ENCODE measurements at regions of chr2 and their contacts with region 1.

Region 1: GRCh38 chr2:143162123-143162837 is 33.1 kb downstream of the ARHGAP15 start:
- DNase-seq: peak; percentile 77
- H3K4me3 Mint-ChIP-seq: peak overlapping the region; percentile 2
- H3K27ac Mint-ChIP-seq: peak overlapping the region; percentile 53
- H3K4me1 Mint-ChIP-seq: peaks cover 82% of the 10 kb centered on the region
- H3K27me3 Mint-ChIP-seq: no peaks in the 10 kb centered on the region

Region 2: DNA sequence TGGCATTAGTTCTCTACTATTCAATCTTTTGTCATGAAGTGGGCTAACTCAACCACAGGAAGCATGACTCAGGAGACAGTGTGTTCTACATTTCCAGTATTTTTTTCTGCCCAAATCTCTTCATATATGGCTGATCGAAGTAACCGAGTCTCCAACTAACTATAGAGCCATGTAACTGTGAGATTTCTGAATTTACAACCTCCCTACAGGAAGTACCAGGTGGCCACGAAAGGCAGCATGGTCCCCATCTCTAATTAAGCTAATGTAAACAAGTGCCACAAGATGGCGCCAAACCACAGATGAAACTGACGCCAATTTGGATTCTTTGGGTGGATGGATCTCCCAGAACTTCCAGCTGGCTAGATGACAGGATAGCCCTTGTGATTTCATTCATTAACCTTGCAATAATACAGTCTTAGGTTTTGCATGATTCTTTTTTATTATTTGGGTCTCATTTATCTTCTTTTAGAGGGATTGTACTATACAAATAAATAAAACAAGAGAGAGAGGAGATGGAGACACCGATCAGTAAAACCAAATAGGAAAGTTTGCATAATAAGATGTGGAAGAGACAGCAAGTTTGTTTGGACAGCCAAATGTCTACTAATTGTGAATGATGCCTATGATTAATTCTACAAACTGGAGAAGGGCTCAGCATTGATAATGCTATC is 51.4 kb before region 1 on chr2:
- CTCF ChIA-PET with region 1: interaction called, 60 read pairs
- intact Hi-C with region 1: loop called (anchors 1 kb)
- DNase-seq: peak; percentile 82
- H3K4me3 Mint-ChIP-seq: peak overlapping the region; percentile 59
- H3K27ac Mint-ChIP-seq: peak overlapping the region; percentile 90
- H3K4me1 Mint-ChIP-seq: peaks cover 46% of the 10 kb centered on the region
- H3K27me3 Mint-ChIP-seq: no peaks in the 10 kb centered on the region

Region 3: GRCh38 chr2:143150287-143150686 is 12.0 kb before region 1 on chr2:
- CTCF ChIA-PET with region 1: interaction called, 11 read pairs
- intact Hi-C with region 1: loop called (anchors 1 kb)
- DNase-seq: peak; percentile 33
- H3K4me3 Mint-ChIP-seq: peak overlapping the region; percentile 52
- H3K27ac Mint-ChIP-seq: peak overlapping the region; percentile 91
- H3K4me1 Mint-ChIP-seq: peaks cover 80% of the 10 kb centered on the region
- H3K27me3 Mint-ChIP-seq: no peaks in the 10 kb centered on the region

Region 4: GRCh38 chr2:143217512-143218115 is 55.3 kb after region 1 on chr2:
- CTCF ChIA-PET with region 1: interaction called, 57 read pairs
- intact Hi-C with region 1: loop called (anchors 1 kb)
- DNase-seq: no peak
- H3K4me3 Mint-ChIP-seq: no peak overlapping the region
- H3K27ac Mint-ChIP-seq: peak overlapping the region; percentile 48
- H3K4me1 Mint-ChIP-seq: peaks cover 32% of the 10 kb centered on the region
- H3K27me3 Mint-ChIP-seq: no peaks in the 10 kb centered on the region

Region 5: DNA sequence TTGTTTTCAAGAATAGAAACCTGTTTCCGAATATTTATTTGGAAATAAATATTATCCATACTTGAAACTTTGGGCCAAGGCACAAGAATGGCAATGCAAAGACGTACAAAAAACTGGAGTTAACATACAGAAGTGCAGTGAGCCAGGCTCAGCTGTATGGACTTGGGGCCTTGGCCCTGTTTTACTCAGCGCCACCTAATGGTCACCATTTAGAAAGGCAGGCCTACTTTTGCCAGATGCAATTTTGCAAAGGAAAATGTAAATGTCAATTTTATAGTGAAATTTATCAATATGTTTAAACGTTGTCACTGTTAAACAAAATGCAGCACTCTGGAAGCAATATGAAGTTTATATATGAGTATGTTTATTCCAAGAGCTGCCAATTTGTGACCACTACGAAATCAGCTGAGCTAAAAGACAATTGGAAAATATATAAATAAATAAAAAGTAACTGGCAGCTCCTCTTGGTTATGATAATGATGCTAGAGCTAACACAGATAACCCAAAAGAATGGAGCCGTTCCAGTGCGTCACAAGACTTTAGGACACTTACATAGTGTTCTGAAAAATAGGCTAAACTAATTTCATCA is 121.9 kb after region 1 on chr2:
- CTCF ChIA-PET with region 1: interaction called, 9 read pairs
- intact Hi-C with region 1: loop called (anchors 1 kb)
- DNase-seq: peak; percentile 38
- H3K4me3 Mint-ChIP-seq: no peak overlapping the region
- H3K27ac Mint-ChIP-seq: no peak overlapping the region
- H3K4me1 Mint-ChIP-seq: peaks cover 48% of the 10 kb centered on the region
- H3K27me3 Mint-ChIP-seq: no peaks in the 10 kb centered on the region

Region 6: GRCh38 chr2:143468341-143468888 is 306.1 kb after region 1 on chr2:
- CTCF ChIA-PET with region 1: no interaction called
- intact Hi-C with region 1: loop called (anchors 10 kb)
- DNase-seq: no peak
- H3K4me3 Mint-ChIP-seq: peak overlapping the region; percentile 12
- H3K27ac Mint-ChIP-seq: peak overlapping the region; percentile 50
- H3K4me1 Mint-ChIP-seq: peaks cover 28% of the 10 kb centered on the region
- H3K27me3 Mint-ChIP-seq: no peaks in the 10 kb centered on the region

Region 7: DNA sequence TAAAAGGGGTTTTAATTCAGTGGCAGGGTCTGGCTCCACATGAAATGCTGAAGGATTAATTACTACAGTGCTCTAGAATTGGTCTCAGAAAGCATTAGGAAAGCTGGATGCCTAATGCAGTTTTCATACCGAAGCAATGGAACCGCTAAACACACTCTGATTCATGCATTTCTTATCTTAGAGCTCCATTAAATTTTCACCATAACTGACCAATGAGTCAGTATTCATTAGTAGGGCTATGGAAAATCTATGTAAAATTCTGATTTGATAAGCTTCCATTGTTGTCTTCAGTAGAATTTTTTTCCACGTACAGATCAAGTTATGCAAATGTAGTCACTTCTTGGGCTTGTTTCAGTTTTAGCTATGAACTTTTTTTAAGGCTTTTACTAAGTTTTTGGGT is 326.9 kb after region 1 on chr2:
- CTCF ChIA-PET with region 1: no interaction called
- intact Hi-C with region 1: no loop called
- DNase-seq: no peak
- H3K4me3 Mint-ChIP-seq: no peak overlapping the region
- H3K27ac Mint-ChIP-seq: no peak overlapping the region
- H3K4me1 Mint-ChIP-seq: peaks cover 21% of the 10 kb centered on the region
- H3K27me3 Mint-ChIP-seq: no peaks in the 10 kb centered on the region

Measured in activated naive CD4-positive, alpha-beta T cell treated with anti-CD3 and anti-CD28 coated beads for 36 hours (primary cell).